CD4-positive, alpha-beta memory T cell (primary cell): ENCODE measurements at regions of chr5 and their contacts with region 1.

Region 1: DNA sequence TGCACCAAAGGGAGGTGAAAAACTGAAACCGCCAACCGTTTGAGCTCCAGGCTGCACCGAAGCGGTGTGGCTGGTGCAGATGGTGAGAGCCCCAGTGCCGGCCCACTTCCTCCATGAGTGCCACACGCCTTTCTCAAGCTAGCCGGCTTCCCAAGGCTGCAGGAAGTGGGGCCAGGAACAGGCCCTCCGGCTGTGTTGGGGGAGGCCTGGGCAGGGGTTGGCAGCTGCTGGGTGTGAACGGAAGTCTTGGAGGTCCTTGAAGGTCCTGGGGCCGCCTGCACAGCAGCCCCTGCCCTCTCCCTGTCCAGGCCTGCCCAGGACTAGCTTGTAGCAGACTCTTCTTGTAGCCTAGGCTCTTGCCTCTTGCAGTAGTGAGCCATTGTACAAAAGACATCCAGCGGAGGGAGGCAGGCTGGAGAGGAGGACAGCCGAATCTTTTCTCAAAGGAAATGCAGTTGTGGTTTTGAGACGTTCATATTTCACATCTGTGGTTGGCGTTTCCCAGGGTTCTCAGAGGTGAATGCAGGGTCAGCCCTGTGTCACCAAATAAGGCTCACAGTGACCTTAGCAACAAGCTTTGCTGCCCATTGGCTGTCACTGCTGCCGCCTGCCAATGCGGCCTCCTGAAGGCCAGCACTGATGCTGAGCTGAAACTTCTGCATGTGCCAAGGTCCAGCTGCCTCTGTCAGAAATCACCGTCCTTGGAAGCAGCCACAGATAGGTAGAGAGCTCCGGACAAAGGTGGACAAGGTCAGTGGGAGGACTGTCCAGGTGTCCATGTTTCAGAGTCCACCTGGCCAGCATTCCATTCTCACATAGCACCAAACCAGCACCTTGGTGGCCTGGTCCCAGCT is 23.9 kb downstream of the IRF1 start:
- DNase-seq: peak; percentile 84 to 91 (median 85)
- H3K4me3 ChIP-seq: peak overlapping the region; percentile 2 to 50
- H3K4me3 Mint-ChIP-seq: peak overlapping the region; percentile 66 to 87 (median 83)
- H3K27ac ChIP-seq: peak overlapping the region; percentile 63
- H3K27ac Mint-ChIP-seq: peak overlapping the region; percentile 94 to 98 (median 96)
- H3K4me1 ChIP-seq: peaks cover 99% of the 10 kb centered on the region
- H3K4me1 Mint-ChIP-seq: peaks cover 76 to 100% (median 90%) of the 10 kb centered on the region in 4 donors
- H3K27me3 ChIP-seq: no peaks in the 10 kb centered on the region
- H3K27me3 Mint-ChIP-seq: no peaks in the 10 kb centered on the region

Region 2: DNA sequence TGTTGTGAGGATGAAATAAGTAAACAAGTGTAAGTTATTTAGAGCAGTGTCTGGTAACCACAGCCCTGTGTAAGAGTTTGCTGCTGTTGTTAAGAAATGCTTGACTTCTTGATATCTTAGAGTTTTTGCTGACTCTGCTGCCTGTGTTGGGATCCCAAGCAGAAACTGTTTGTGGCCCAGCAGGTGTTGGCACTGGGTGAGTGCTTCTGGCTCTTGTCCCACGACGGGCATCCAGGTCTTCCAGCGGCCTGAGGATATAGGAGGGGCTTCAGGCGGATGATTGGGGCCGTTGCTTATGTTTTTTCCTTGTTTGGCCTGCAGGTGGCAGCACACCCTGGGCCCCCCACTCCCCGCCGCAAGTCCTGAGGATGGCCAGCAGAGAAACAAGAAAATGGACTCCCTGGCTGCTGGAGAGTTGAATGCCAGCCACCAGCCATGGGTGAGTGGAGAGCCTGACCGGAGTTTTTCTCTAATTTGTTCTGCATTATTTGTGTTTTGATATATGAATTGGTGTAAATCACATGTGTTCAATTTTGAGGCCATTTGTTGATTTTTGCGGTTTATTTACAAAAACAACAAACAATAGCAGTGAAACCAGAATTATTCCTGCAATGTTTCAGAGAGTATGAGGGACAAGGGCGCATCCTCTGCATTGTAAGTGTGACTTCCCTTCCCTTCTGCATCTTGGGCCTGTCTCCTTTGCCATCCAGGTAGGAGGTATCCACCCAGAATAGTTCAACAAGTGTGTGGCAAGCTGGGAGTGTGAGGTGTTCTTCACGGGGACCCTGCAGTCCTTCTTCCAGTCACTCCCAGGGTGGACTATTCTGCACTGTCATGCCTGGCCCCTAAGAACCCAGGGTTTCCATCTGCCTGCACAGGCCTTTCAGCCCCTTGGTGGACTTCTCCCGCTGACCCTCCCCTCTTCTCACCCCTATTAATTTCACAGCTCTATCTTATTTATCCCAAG is 46.9 kb before region 1 on chr5:
- CTCF ChIA-PET with region 1: interaction called, 73 read pairs
- POLR2A ChIA-PET with region 1: interaction called, 494 read pairs
- intact Hi-C with region 1: loop called (anchors 1 kb)
- DNase-seq: peak; percentile 57 to 69 (median 64)
- H3K4me3 ChIP-seq: peak overlapping the region; percentile 38 to 51
- H3K4me3 Mint-ChIP-seq: peak overlapping the region; percentile 75 to 93 (median 80)
- H3K27ac ChIP-seq: peak overlapping the region; percentile 71
- H3K27ac Mint-ChIP-seq: peak overlapping the region; percentile 96 to 99 (median 97)
- H3K4me1 ChIP-seq: peaks cover 100% of the 10 kb centered on the region
- H3K4me1 Mint-ChIP-seq: peaks cover 76 to 98% (median 86%) of the 10 kb centered on the region in 4 donors
- H3K27me3 ChIP-seq: no peaks in the 10 kb centered on the region
- H3K27me3 Mint-ChIP-seq: no peaks in the 10 kb centered on the region

Region 3: GRCh38 chr5:132426525-132427138 is 40.0 kb before region 1 on chr5:
- CTCF ChIA-PET with region 1: interaction called, 73 read pairs
- POLR2A ChIA-PET with region 1: interaction called, 494 read pairs
- intact Hi-C with region 1: loop called (anchors 2 kb)
- DNase-seq: peak; percentile 37 to 83 (median 44)
- H3K4me3 ChIP-seq: peak overlapping the region; percentile 10 to 28
- H3K4me3 Mint-ChIP-seq: peak overlapping the region; percentile 67 to 83 (median 76)
- H3K27ac ChIP-seq: peak overlapping the region; percentile 77
- H3K27ac Mint-ChIP-seq: peak overlapping the region; percentile 96 to 99 (median 98)
- H3K4me1 ChIP-seq: peaks cover 100% of the 10 kb centered on the region
- H3K4me1 Mint-ChIP-seq: peaks cover 80 to 98% (median 94%) of the 10 kb centered on the region in 4 donors
- H3K27me3 ChIP-seq: no peaks in the 10 kb centered on the region
- H3K27me3 Mint-ChIP-seq: no peaks in the 10 kb centered on the region

Region 4: DNA sequence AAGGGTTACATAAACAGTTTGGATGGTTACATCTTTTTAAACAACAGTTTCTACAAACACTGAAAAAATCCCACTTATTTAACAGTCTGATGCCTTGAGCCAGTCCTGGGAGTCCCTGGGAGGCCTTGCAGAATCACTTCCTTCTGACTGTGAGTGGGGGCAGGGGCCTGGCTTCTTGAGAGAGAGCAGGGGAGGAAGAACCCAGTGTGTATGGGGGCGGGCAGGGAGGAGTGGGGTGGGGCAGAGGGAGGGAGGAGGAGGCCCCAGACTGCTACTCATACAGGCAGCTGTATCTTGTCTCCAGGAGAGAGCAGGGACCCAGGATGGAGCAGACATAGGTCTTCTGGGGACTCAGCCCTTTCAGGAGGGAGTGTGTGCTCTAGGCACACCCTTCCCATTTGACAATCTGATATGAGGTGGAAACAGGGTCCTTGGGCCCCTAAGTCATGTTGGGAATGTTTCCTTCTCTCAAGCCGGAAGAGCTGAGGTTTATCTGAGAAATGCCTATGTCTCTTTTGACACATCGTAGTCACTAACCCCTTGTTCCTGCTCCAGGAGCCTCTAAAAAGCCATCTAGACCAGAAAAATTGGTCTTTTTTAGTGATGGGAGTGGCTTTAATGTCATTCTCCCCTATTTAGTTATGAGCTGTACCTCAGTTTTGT is 28.9 kb before region 1 on chr5:
- CTCF ChIA-PET with region 1: interaction called, 13 read pairs
- POLR2A ChIA-PET with region 1: interaction called, 494 read pairs
- intact Hi-C with region 1: no loop called
- DNase-seq: peak; percentile 49 to 75 (median 52)
- H3K4me3 ChIP-seq: peak overlapping the region; percentile 4 to 8
- H3K4me3 Mint-ChIP-seq: peak overlapping the region; percentile 52 to 85 (median 70)
- H3K27ac ChIP-seq: peak overlapping the region; percentile 60
- H3K27ac Mint-ChIP-seq: peak overlapping the region; percentile 89 to 96 (median 92)
- H3K4me1 ChIP-seq: peaks cover 99% of the 10 kb centered on the region
- H3K4me1 Mint-ChIP-seq: peaks cover 64 to 97% (median 83%) of the 10 kb centered on the region in 4 donors
- H3K27me3 ChIP-seq: no peaks in the 10 kb centered on the region
- H3K27me3 Mint-ChIP-seq: no peaks in the 10 kb centered on the region

Region 5: GRCh38 chr5:132446669-132447068 is 20.0 kb before region 1 on chr5:
- CTCF ChIA-PET with region 1: interaction called, 8 read pairs
- POLR2A ChIA-PET with region 1: interaction called, 37 read pairs
- intact Hi-C with region 1: no loop called
- DNase-seq: no peak
- H3K4me3 ChIP-seq: peak overlapping the region in 1 of 2 donors; percentile 7
- H3K4me3 Mint-ChIP-seq: peak overlapping the region; percentile 43 to 81 (median 75)
- H3K27ac ChIP-seq: peak overlapping the region; percentile 5
- H3K27ac Mint-ChIP-seq: peak overlapping the region; percentile 73 to 94 (median 89)
- H3K4me1 ChIP-seq: peaks cover 90% of the 10 kb centered on the region
- H3K4me1 Mint-ChIP-seq: peaks cover 56 to 97% (median 76%) of the 10 kb centered on the region in 4 donors
- H3K27me3 ChIP-seq: no peaks in the 10 kb centered on the region
- H3K27me3 Mint-ChIP-seq: no peaks in the 10 kb centered on the region

Region 6: DNA sequence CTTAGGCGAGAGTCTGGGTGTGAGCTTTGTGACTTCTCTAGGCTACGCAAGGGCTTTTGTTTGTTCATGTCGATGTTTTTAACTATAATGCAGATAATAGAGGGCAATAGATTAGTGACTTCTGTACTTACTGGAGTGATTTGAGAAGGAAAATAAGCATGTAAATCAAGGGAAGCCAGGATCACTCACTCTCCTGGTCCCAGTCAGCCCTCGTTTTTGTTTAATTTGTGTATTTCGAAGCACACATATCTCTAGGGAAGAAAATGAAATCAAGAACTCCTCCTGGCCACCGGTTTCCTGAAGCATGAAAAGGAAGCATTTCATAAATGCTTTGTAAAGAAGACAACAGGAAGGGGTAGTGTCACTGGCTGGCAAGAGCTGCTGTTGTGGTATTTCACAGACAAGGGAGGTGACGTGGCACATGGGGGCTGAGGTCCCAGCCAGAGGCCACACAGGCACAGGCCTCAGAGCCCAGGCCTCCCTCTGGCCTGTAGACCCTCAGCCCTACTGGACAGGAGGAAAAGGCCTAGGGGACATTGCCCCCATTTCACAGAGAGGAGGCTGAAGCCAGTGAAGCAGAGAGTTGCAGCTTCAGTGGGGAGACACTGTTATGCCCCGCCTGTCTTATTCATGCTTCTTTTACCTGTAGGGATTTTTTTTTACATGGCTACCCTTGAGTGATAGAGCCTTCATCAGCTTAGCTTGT is 10.2 kb before region 1 on chr5:
- CTCF ChIA-PET with region 1: interaction called, 67 read pairs
- POLR2A ChIA-PET with region 1: interaction called, 1,580 read pairs
- intact Hi-C with region 1: loop called (anchors 1 kb)
- DNase-seq: peak; percentile 76 to 87 (median 79)
- H3K4me3 ChIP-seq: peak overlapping the region; percentile 41 to 48
- H3K4me3 Mint-ChIP-seq: peak overlapping the region; percentile 73 to 89 (median 82)
- H3K27ac ChIP-seq: peak overlapping the region; percentile 77
- H3K27ac Mint-ChIP-seq: peak overlapping the region; percentile 97 to 100 (median 100)
- H3K4me1 ChIP-seq: peaks cover 100% of the 10 kb centered on the region
- H3K4me1 Mint-ChIP-seq: peaks cover 82 to 95% (median 90%) of the 10 kb centered on the region in 4 donors
- H3K27me3 ChIP-seq: no peaks in the 10 kb centered on the region
- H3K27me3 Mint-ChIP-seq: no peaks in the 10 kb centered on the region

Region 7: DNA sequence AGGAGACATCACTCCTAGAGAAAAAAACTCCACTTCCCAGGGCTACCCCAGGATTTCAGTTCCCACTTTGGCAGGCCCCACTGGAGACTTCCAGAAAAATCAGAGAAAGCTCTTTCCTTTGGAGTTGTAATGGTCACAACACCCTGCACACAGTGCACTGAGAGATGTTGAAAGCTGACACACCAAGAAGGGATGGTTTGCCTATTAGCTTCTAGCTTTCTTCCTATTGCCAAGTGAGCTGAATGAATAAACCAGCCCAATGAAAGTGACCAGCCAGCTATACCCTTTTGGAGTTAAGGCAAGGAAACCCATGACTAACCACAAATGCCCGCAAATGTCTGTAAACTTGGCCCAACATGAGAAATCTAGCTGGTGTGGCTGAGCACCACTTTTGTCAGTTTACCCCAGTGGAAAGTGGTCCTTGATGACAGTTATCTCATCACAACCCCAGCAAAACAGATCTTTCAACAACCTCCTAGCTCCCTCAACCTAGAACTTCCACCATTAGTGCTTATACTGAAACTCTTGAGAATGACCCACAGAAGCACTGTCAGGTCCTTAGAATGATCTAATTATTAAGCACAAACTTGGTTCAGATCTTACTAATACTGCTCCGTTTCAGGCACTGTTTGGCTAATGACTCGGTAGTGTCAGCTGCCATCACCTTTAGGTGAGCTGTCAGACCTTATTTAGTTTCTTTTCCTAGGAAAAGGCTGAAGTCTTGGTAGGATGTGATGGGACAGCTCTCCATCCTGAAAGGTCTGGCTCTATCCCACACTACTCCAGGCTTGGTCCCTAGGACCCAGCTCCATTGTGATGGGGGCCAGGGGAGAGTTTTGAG is 12.7 kb after region 1 on chr5:
- CTCF ChIA-PET with region 1: interaction called, 86 read pairs
- POLR2A ChIA-PET with region 1: interaction called, 1,580 read pairs
- intact Hi-C with region 1: no loop called
- DNase-seq: peak in 4 of 5 donors; percentile 24 to 39 (median 30)
- H3K4me3 ChIP-seq: no peak overlapping the region
- H3K4me3 Mint-ChIP-seq: peak overlapping the region in 2 of 8 donors; percentile 30 to 44
- H3K27ac ChIP-seq: peak overlapping the region; percentile 37
- H3K27ac Mint-ChIP-seq: peak overlapping the region; percentile 82 to 97 (median 90)
- H3K4me1 ChIP-seq: peaks cover 92% of the 10 kb centered on the region
- H3K4me1 Mint-ChIP-seq: peaks cover 39 to 94% (median 69%) of the 10 kb centered on the region in 4 donors
- H3K27me3 ChIP-seq: no peaks in the 10 kb centered on the region
- H3K27me3 Mint-ChIP-seq: no peaks in the 10 kb centered on the region

Region 8: GRCh38 chr5:134451936-134452505 is 1985.4 kb after region 1 on chr5:
- CTCF ChIA-PET with region 1: no interaction called
- POLR2A ChIA-PET with region 1: no interaction called
- intact Hi-C with region 1: no loop called
- DNase-seq: no peak
- H3K4me3 ChIP-seq: no peak overlapping the region
- H3K4me3 Mint-ChIP-seq: no peak overlapping the region
- H3K27ac ChIP-seq: no peak overlapping the region
- H3K27ac Mint-ChIP-seq: peak overlapping the region in 1 of 7 donors; percentile 13
- H3K4me1 ChIP-seq: no peaks in the 10 kb centered on the region
- H3K4me1 Mint-ChIP-seq: peaks cover 0 to 3% (median 0%) of the 10 kb centered on the region in 4 donors
- H3K27me3 ChIP-seq: no peaks in the 10 kb centered on the region
- H3K27me3 Mint-ChIP-seq: no peaks in the 10 kb centered on the region